ENCODE measurements at regions of chr3 and their contacts with region 1.

Region 1: GRCh38 chr3:55746808-55747413 is 259.8 kb upstream of the WNT5A start:
- DNase-seq: no peak
- H3K4me3 ChIP-seq: no peak overlapping the region
- H3K27ac ChIP-seq: no peak overlapping the region
- H3K4me1 ChIP-seq: peaks cover 11% of the 10 kb centered on the region
- H3K27me3 ChIP-seq: no peaks in the 10 kb centered on the region
- CTCF ChIP-seq: peak; percentile 35 to 50

Region 2: DNA sequence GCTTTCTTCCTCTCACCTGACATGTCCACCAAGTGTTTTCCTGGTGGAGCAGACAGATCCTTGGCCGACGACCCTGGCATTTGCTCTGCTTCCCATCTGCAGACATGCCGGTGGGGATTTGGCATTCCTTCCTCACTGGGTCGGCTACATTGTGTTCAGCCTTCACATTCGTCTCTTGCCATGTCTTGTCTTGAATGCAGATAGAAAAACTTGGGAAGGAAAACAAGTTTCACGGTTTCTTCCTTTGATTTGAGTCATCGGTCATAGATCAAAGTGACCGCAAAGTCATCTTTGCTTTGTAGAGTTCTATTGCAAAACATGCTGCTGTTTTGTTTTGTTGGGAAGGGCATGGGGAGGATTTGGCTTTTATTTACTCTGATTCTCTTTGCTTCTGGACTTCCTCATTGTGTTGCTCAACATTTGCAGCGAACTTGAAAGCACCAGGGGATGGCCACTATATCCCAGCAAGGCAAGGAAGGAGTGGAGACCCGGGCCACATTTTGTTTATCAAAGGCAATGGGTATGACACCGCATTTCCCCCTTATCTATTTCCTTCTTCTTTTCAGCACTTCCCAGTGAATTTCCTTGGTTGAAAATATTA is 1303.2 kb before region 1 on chr3:
- CTCF ChIA-PET with region 1: no interaction called
- dilution Hi-C with region 1: no loop called
- in situ Hi-C with region 1: no loop called
- intact Hi-C with region 1: no loop called
- DNase-seq: peak; percentile 19
- H3K4me3 ChIP-seq: no peak overlapping the region
- H3K27ac ChIP-seq: no peak overlapping the region
- H3K4me1 ChIP-seq: no peaks in the 10 kb centered on the region
- H3K27me3 ChIP-seq: no peaks in the 10 kb centered on the region
- CTCF ChIP-seq: no peak

Region 3: GRCh38 chr3:54951405-54951804 is 795.5 kb before region 1 on chr3:
- CTCF ChIA-PET with region 1: no interaction called
- dilution Hi-C with region 1: no loop called
- in situ Hi-C with region 1: no loop called
- intact Hi-C with region 1: no loop called
- DNase-seq: peak; percentile 17
- H3K4me3 ChIP-seq: no peak overlapping the region
- H3K27ac ChIP-seq: no peak overlapping the region
- H3K4me1 ChIP-seq: peaks cover 9% of the 10 kb centered on the region
- H3K27me3 ChIP-seq: no peaks in the 10 kb centered on the region
- CTCF ChIP-seq: peak in 1 of 2 donors; percentile 43

Region 4: GRCh38 chr3:56042326-56042951 is 295.5 kb after region 1 on chr3:
- CTCF ChIA-PET with region 1: no interaction called
- dilution Hi-C with region 1: no loop called
- in situ Hi-C with region 1: no loop called
- intact Hi-C with region 1: loop called (anchors 10 kb)
- DNase-seq: peak; percentile 16
- H3K4me3 ChIP-seq: no peak overlapping the region
- H3K27ac ChIP-seq: no peak overlapping the region
- H3K4me1 ChIP-seq: no peaks in the 10 kb centered on the region
- H3K27me3 ChIP-seq: no peaks in the 10 kb centered on the region
- CTCF ChIP-seq: peak; percentile 54 to 70

Region 5: GRCh38 chr3:56183529-56183928 is 436.6 kb after region 1 on chr3:
- CTCF ChIA-PET with region 1: no interaction called
- dilution Hi-C with region 1: no loop called
- in situ Hi-C with region 1: no loop called
- intact Hi-C with region 1: no loop called
- DNase-seq: no peak
- H3K4me3 ChIP-seq: no peak overlapping the region
- H3K27ac ChIP-seq: no peak overlapping the region
- H3K4me1 ChIP-seq: no peaks in the 10 kb centered on the region
- H3K27me3 ChIP-seq: no peaks in the 10 kb centered on the region
- CTCF ChIP-seq: no peak